PC-9 (cell line): ENCODE measurements at regions of chr5 and their contacts with region 1.

Region 1: DNA sequence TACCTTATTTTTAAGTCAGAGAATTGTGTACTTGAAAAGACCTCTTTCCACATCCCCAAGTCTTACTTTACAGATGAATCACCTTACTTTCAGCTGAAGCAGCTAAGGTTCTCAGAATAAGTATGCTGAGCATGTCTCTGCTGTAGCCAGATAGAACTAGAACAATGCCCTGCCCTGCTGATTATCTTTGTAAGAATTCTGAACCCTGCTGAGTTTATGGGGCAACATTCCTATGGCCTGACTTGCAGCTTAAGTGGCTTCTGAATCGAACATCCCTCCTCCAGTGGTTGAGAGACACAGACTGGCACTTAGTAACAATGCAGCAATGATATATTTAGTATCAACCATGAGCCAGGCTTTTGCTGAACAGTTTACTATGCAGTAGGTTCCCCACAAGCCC is 592.0 kb upstream of the WWC1 start:
- DNase-seq: peak; percentile 79 to 100
- H3K4me3 ChIP-seq: no peak overlapping the region
- H3K27ac ChIP-seq: peak overlapping the region; percentile 97
- H3K4me1 ChIP-seq: peaks cover 40% of the 10 kb centered on the region
- H3K27me3 ChIP-seq: no peaks in the 10 kb centered on the region
- CTCF ChIP-seq: no peak

Region 2: GRCh38 chr5:167555565-167556166 is 143.8 kb before region 1 on chr5:
- CTCF ChIA-PET with region 1: no interaction called
- POLR2A ChIA-PET with region 1: no interaction called
- intact Hi-C with region 1: no loop called
- DNase-seq: no peak
- H3K4me3 ChIP-seq: no peak overlapping the region
- H3K27ac ChIP-seq: no peak overlapping the region
- H3K4me1 ChIP-seq: no peaks in the 10 kb centered on the region
- H3K27me3 ChIP-seq: peaks cover 30% of the 10 kb centered on the region
- CTCF ChIP-seq: no peak

Region 3: GRCh38 chr5:167587772-167588437 is 111.5 kb before region 1 on chr5:
- CTCF ChIA-PET with region 1: interaction called, 3 read pairs
- POLR2A ChIA-PET with region 1: no interaction called
- intact Hi-C with region 1: loop called (anchors 2 kb)
- DNase-seq: peak in 1 of 2 experiments; percentile 17
- H3K4me3 ChIP-seq: no peak overlapping the region
- H3K27ac ChIP-seq: no peak overlapping the region
- H3K4me1 ChIP-seq: no peaks in the 10 kb centered on the region
- H3K27me3 ChIP-seq: no peaks in the 10 kb centered on the region
- CTCF ChIP-seq: peak; percentile 60

Region 4: DNA sequence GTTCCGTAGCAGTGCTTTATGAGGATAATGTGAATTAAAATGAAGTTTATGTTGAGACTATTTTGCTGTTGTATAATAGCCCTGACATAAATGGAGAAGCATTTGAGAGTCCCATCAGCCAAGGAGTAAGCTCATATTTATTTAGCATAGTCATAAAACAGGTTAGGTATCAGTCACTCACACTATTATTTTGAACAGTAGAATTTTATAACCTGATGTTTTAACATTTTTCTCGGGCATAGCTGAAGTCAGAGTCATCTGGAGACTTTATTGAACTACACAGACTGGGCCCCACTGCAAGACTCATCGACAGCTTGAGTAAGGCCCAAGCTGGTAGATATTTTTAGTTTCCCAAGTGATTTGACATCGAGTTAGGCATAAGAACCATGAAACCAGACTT is 28.3 kb before region 1 on chr5:
- CTCF ChIA-PET with region 1: no interaction called
- POLR2A ChIA-PET with region 1: interaction called, 13 read pairs
- intact Hi-C with region 1: no loop called
- DNase-seq: no peak
- H3K4me3 ChIP-seq: no peak overlapping the region
- H3K27ac ChIP-seq: no peak overlapping the region
- H3K4me1 ChIP-seq: no peaks in the 10 kb centered on the region
- H3K27me3 ChIP-seq: no peaks in the 10 kb centered on the region
- CTCF ChIP-seq: no peak

Region 5: GRCh38 chr5:167723254-167723871 is 23.9 kb after region 1 on chr5:
- CTCF ChIA-PET with region 1: no interaction called
- POLR2A ChIA-PET with region 1: no interaction called
- intact Hi-C with region 1: loop called (anchors 1 kb)
- DNase-seq: peak; percentile 66 to 70
- H3K4me3 ChIP-seq: no peak overlapping the region
- H3K27ac ChIP-seq: no peak overlapping the region
- H3K4me1 ChIP-seq: 0 out of 2 replicates have a peak, but pooled peaks cover 5% of the 10 kb centered on the region
- H3K27me3 ChIP-seq: no peaks in the 10 kb centered on the region
- CTCF ChIP-seq: peak; percentile 93

Region 6: GRCh38 chr5:168365581-168366081 is 666.2 kb after region 1 on chr5:
- CTCF ChIA-PET with region 1: no interaction called
- POLR2A ChIA-PET with region 1: interaction called, 17 read pairs
- intact Hi-C with region 1: no loop called
- DNase-seq: peak; percentile 88 to 98
- H3K4me3 ChIP-seq: peak overlapping the region; percentile 38; the same call in 1 of the 2 replicates
- H3K27ac ChIP-seq: peak overlapping the region; percentile 97
- H3K4me1 ChIP-seq: peaks cover 76% of the 10 kb centered on the region
- H3K27me3 ChIP-seq: no peaks in the 10 kb centered on the region
- CTCF ChIP-seq: peak; percentile 69

Region 7: DNA sequence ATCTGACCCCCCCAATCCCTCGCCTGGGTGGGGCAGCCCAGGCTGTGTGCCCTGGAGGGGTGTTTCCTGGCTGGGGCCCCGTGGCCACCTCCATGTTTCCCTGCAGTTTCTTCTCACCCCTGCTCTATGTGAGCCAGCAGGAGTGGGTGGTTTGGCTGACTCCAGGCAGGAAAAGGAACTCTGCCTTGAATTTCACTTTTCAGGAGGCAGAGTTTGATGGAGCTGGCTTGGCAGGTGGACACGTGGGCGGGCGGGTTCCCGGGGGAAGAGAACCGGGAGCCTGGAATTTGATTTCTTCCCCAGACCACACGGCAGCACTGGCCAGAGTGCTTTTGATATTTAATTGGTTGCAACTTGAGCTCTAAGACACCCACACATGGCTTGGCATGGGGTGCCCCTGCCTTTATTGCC is 999.6 kb after region 1 on chr5:
- CTCF ChIA-PET with region 1: no interaction called
- POLR2A ChIA-PET with region 1: no interaction called
- intact Hi-C with region 1: no loop called
- DNase-seq: no peak
- H3K4me3 ChIP-seq: no peak overlapping the region
- H3K27ac ChIP-seq: no peak overlapping the region
- H3K4me1 ChIP-seq: no peaks in the 10 kb centered on the region
- H3K27me3 ChIP-seq: peaks cover 74% of the 10 kb centered on the region
- CTCF ChIP-seq: no peak